Pancreas (tissue), 10 donors: ENCODE measurements at regions of chr5 and their contacts with region 1.

Region 1: DNA sequence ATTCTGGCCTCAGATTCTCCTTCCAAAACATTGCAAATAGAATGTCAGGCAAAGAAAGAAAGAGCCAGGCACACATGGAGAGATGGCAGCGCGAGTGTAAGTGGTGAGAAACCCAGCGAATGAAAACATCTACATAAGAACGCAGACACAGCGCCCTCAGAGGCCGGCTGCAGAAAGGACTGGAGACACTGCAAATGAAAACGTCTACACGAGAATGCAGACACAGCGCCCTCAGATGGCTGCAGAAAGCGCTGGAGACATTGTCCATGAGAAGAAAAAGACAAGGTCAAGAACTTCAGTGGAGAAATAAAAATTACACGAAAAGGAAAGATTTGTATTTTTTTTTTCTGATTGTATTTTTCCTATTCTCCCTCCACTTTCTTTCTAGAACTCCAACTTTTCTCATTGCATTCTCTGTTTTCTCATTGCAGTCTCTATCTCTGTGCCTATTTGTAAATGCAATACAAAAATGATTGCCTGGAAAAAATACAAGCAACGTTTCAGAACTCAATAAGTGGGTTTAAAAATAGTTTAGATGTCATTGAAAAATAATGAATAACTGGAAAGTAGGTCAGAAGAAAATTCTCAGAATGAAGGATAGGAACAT is 117.9 kb upstream of the LPCAT1 start:
- DNase-seq: peak; percentile 66 to 79 (median 72)
- ATAC-seq: peak; percentile 72 to 92 (median 86)
- H3K4me3 ChIP-seq: no peak overlapping the region
- H3K27ac ChIP-seq: no peak overlapping the region
- H3K4me1 ChIP-seq: no peaks in the 10 kb centered on the region
- H3K27me3 ChIP-seq: peaks cover 0 to 17% (median 2%) of the 10 kb centered on the region in 4 donors
- CTCF ChIP-seq: peak; percentile 49 to 82 (median 62)

Region 2: GRCh38 chr5:1167728-1168709 is 473.6 kb before region 1 on chr5:
- intact Hi-C with region 1: loop called in 1 of 3 experiments (anchors 10 kb)
- DNase-seq: peak; percentile 69 to 83 (median 76)
- ATAC-seq: peak; percentile 84 to 96 (median 94)
- H3K4me3 ChIP-seq: peak overlapping the region in 1 of 4 donors; percentile 28
- H3K27ac ChIP-seq: no peak overlapping the region
- H3K4me1 ChIP-seq: peaks cover 0 to 8% (median 4%) of the 10 kb centered on the region in 3 donors
- H3K27me3 ChIP-seq: no peaks in the 10 kb centered on the region
- CTCF ChIP-seq: peak; percentile 45 to 68 (median 50)

Region 3: GRCh38 chr5:1385395-1386273 is 256.0 kb before region 1 on chr5:
- intact Hi-C with region 1: loop called in 1 of 3 experiments (anchors 10 kb)
- DNase-seq: peak; percentile 87 to 96 (median 92)
- ATAC-seq: peak; percentile 96 to 98 (median 96)
- H3K4me3 ChIP-seq: peak overlapping the region; percentile 55 to 74 (median 63)
- H3K27ac ChIP-seq: peak overlapping the region; percentile 68 to 80 (median 74)
- H3K4me1 ChIP-seq: no peaks in the 10 kb centered on the region
- H3K27me3 ChIP-seq: no peaks in the 10 kb centered on the region
- CTCF ChIP-seq: no peak